Right lobe of liver (tissue), 6 donors: ENCODE measurements at regions of chr17 and their contacts with region 1.

Region 1: GRCh38 chr17:36111068-36111490 is 7.5 kb downstream of the CCL4 start:
- DNase-seq: no peak
- ATAC-seq: no peak
- H3K4me3 ChIP-seq: no peak overlapping the region
- H3K27ac ChIP-seq: no peak overlapping the region
- H3K4me1 ChIP-seq: no peaks in the 10 kb centered on the region
- H3K27me3 ChIP-seq: no peaks in the 10 kb centered on the region
- CTCF ChIP-seq: no peak
- POLR2A ChIP-seq: no peak

Region 2: DNA sequence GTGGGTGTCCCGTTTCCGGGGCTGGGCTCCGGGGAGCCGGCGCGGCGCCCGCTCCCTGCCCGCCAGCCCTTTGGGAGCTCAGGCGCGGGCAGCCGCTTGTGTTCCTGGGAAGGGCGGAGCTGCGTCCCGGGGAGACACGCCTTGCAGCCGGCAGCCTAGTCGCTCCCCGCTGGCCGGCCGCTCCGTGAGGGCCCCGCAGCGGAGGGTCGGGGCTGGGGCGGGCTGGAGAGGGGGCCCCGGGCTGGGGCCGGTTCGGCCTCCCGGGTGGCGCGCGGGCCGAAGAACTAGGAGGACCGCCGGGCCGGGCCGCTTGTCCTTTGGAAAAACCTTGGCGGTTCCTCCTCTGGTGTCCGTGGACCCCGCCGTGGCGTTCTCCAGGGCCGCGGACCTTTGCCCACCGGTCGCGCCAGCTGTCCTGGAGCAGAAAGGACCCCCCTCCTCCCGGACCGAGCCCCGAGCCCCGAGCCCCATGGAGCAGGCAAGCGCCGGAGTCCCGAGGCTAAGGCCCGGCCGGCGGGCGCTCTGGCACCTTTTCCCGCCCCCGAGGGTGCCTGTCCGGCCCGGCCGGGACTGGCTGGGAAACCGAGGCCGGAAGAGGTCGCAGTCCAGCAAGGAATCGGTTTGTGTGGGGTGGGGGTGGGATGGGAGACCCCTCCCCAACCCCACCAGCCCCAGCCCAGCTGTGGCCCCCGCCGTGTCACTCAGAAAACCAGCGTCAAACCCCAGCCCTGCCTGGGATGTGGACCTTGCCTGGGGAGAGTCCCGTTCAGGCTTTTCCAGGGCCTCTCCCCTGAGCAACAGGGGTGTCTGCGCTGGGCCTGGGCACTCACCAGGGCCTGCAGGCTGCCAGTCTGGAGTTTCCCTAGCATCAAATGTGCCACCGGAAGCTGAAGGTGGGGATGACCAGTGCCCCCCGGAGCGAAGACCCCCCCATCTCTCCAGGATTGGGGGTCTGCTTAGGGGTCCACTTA is 72.2 kb after region 1 on chr17:
- intact Hi-C with region 1: loop called (anchors 5 kb)
- DNase-seq: peak; percentile 79 to 84 (median 83)
- ATAC-seq: peak; percentile 83 to 93 (median 91)
- H3K4me3 ChIP-seq: peak overlapping the region; percentile 74 to 95 (median 77)
- H3K27ac ChIP-seq: peak overlapping the region in 2 of 3 donors; percentile 65 to 85
- H3K4me1 ChIP-seq: no peaks in the 10 kb centered on the region
- H3K27me3 ChIP-seq: no peaks in the 10 kb centered on the region
- CTCF ChIP-seq: no peak
- POLR2A ChIP-seq: peak; percentile 70

Region 3: GRCh38 chr17:36212966-36213365 is 101.9 kb after region 1 on chr17:
- intact Hi-C with region 1: no loop called
- DNase-seq: no peak
- ATAC-seq: peak in 2 of 4 donors; percentile 14 to 29
- H3K4me3 ChIP-seq: no peak overlapping the region
- H3K27ac ChIP-seq: no peak overlapping the region
- H3K4me1 ChIP-seq: no peaks in the 10 kb centered on the region
- H3K27me3 ChIP-seq: no peaks in the 10 kb centered on the region
- CTCF ChIP-seq: no peak
- POLR2A ChIP-seq: no peak